Uterus (tissue), 4 donors: ENCODE measurements at regions of chr9 and their contacts with region 1.

Region 1: DNA sequence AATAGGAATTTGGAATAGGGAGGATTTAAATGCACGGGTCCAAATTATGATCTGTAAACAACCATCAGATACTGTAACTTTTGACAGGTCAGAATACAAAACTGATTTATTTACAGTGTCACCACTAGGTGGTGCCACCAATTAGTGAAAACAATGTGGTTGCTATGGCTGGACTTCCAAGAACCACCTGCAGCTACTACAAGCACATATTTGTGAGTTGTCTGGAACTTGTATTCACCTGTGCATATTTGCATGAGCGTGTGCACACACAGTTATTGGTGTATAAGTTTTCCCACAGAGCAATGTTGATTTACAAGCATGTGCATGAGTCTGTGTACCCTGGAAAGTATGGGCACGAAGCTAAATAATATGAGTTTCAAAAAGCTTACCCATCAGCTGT is 3.0 kb upstream of the HRCT1 start:
- DNase-seq: no peak
- H3K4me3 ChIP-seq: no peak overlapping the region
- H3K27ac ChIP-seq: no peak overlapping the region
- H3K4me1 ChIP-seq: peaks cover 17 to 23% of the 10 kb centered on the region in 2 donors
- H3K27me3 ChIP-seq: no peaks in the 10 kb centered on the region
- CTCF ChIP-seq: peak; percentile 65 to 86 (median 83)
- POLR2A ChIP-seq: no peak

Region 2: GRCh38 chr9:35859310-35859989 is 43.6 kb before region 1 on chr9:
- intact Hi-C with region 1: no loop called
- DNase-seq: no peak
- H3K4me3 ChIP-seq: no peak overlapping the region
- H3K27ac ChIP-seq: no peak overlapping the region
- H3K4me1 ChIP-seq: no peaks in the 10 kb centered on the region
- H3K27me3 ChIP-seq: no peaks in the 10 kb centered on the region
- CTCF ChIP-seq: no peak
- POLR2A ChIP-seq: no peak

Region 3: GRCh38 chr9:35945341-35946018 is 42.4 kb after region 1 on chr9:
- intact Hi-C with region 1: loop called (anchors 5 kb)
- DNase-seq: peak; percentile 87 to 88
- H3K4me3 ChIP-seq: peak overlapping the region; percentile 1 to 8
- H3K27ac ChIP-seq: peak overlapping the region; percentile 6 to 35
- H3K4me1 ChIP-seq: peaks cover 0 to 4% of the 10 kb centered on the region in 2 donors
- H3K27me3 ChIP-seq: no peaks in the 10 kb centered on the region
- CTCF ChIP-seq: peak; percentile 83 to 91 (median 88)
- POLR2A ChIP-seq: no peak

Region 4: GRCh38 chr9:36204906-36205547 is 302.0 kb after region 1 on chr9:
- intact Hi-C with region 1: no loop called
- DNase-seq: no peak
- H3K4me3 ChIP-seq: no peak overlapping the region
- H3K27ac ChIP-seq: no peak overlapping the region
- H3K4me1 ChIP-seq: no peaks in the 10 kb centered on the region
- H3K27me3 ChIP-seq: no peaks in the 10 kb centered on the region
- CTCF ChIP-seq: no peak
- POLR2A ChIP-seq: no peak